Caco-2 (cell line): ENCODE measurements at regions of chr6 and their contacts with region 1.

Region 1: GRCh38 chr6:145267076-145267867 is 468.0 kb downstream of the EPM2A start:
- DNase-seq: peak; percentile 76 to 77
- H3K4me3 ChIP-seq: no peak overlapping the region
- H3K4me3 Mint-ChIP-seq: peak overlapping the region; percentile 43
- H3K27ac Mint-ChIP-seq: peak overlapping the region; percentile 70
- H3K4me1 ChIP-seq: peaks cover 51% of the 10 kb centered on the region
- H3K4me1 Mint-ChIP-seq: peaks cover 51% of the 10 kb centered on the region
- H3K27me3 ChIP-seq: no peaks in the 10 kb centered on the region
- H3K27me3 Mint-ChIP-seq: no peaks in the 10 kb centered on the region
- CTCF ChIP-seq: no peak

Region 2: DNA sequence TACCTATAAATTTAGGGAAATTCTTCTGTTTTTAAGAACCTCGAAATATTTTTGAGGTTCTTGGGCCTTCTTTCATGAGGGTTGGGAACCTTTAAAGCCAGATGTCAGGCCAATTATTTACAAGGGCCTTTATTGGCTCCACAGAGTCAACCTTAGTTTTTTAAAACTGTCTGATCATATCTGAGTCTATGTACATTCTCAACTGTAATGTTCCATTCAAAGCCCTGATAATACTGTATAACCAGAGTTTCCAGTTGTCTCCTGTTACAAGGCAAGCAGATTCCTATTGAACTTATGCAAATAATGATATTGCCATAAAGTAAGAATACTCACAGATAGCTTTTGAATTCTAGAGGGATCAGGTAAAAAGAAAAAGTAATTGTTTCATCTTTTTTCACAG is 77.4 kb before region 1 on chr6:
- CTCF ChIA-PET with region 1: no interaction called
- POLR2A ChIA-PET with region 1: no interaction called
- intact Hi-C with region 1: loop called (anchors 1 kb)
- DNase-seq: peak in 1 of 2 experiments; percentile 46
- H3K4me3 ChIP-seq: no peak overlapping the region
- H3K4me3 Mint-ChIP-seq: no peak overlapping the region
- H3K27ac Mint-ChIP-seq: no peak overlapping the region
- H3K4me1 ChIP-seq: peaks cover 8% of the 10 kb centered on the region
- H3K4me1 Mint-ChIP-seq: peaks cover 7% of the 10 kb centered on the region
- H3K27me3 ChIP-seq: no peaks in the 10 kb centered on the region
- H3K27me3 Mint-ChIP-seq: no peaks in the 10 kb centered on the region
- CTCF ChIP-seq: no peak

Region 3: DNA sequence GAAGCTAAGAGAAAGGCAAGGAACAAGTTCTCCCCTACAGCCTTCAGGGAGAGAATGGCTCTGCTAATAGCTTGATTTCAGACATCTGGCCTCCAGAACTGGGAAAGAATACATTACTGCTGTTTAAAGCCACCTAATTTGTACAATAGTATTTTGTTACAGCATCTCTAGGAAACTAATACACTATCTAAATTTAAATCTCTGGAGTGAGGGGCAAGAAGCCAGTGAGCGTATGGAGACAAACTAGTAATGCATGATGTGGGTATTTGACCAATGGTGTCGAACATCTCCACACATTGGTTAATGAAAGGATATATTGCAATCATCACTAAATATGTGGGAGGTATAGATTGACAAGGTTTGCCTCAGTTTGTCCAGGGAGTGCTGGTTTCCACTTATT is 16.6 kb after region 1 on chr6:
- CTCF ChIA-PET with region 1: no interaction called
- POLR2A ChIA-PET with region 1: no interaction called
- intact Hi-C with region 1: loop called (anchors 2 kb)
- DNase-seq: no peak
- H3K4me3 ChIP-seq: no peak overlapping the region
- H3K4me3 Mint-ChIP-seq: no peak overlapping the region
- H3K27ac Mint-ChIP-seq: no peak overlapping the region
- H3K4me1 ChIP-seq: peaks cover 9% of the 10 kb centered on the region; the same call in 1 of the 2 replicates
- H3K4me1 Mint-ChIP-seq: no peaks in the 10 kb centered on the region
- H3K27me3 ChIP-seq: no peaks in the 10 kb centered on the region
- H3K27me3 Mint-ChIP-seq: no peaks in the 10 kb centered on the region
- CTCF ChIP-seq: no peak